CD4-positive, alpha-beta memory T cell (primary cell): ENCODE measurements at regions of chr22 and their contacts with region 1.

Region 1: DNA sequence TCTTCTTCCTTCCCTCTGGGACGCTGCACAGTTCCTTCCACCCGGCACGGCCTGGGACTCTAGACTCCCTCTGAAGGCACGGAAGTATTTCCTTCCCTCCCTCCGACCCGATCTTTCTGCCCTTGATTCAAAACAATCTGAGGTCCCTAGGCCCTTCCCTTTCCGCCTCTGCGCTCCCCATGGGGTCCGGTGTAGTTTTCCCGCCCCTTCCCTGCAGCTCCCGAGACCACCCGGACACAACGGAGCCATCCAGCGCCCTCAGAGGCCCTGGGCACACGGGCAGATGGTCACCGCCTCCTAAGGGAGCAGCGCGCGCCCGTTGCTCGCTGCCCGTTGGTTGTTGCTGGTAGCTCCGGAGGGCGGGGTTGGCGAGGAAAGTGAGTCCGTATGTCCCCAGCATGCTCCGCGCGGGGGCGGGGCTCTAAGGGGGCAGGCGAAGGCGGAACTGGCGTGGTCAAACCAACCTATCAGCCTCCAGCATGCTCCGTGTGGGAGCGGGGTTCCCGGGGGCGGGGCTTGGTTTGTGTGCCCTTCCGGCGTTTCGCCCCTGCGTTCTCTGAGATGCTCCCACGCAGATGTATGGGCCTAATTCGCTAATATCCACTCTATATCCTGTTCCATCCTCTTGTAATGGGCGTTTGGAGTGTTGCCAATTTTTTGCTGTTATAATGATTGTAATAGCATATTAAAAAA is 19.6 kb downstream of the MIF start:
- DNase-seq: peak; percentile 96 to 99 (median 97)
- H3K4me3 ChIP-seq: peak overlapping the region; percentile 57 to 86
- H3K4me3 Mint-ChIP-seq: peak overlapping the region; percentile 91 to 99 (median 96)
- H3K27ac ChIP-seq: peak overlapping the region; percentile 79
- H3K27ac Mint-ChIP-seq: peak overlapping the region; percentile 88 to 98 (median 96)
- H3K4me1 ChIP-seq: peaks cover 7% of the 10 kb centered on the region
- H3K4me1 Mint-ChIP-seq: peaks cover 9 to 25% (median 15%) of the 10 kb centered on the region in 4 donors
- H3K27me3 ChIP-seq: no peaks in the 10 kb centered on the region
- H3K27me3 Mint-ChIP-seq: no peaks in the 10 kb centered on the region

Region 2: DNA sequence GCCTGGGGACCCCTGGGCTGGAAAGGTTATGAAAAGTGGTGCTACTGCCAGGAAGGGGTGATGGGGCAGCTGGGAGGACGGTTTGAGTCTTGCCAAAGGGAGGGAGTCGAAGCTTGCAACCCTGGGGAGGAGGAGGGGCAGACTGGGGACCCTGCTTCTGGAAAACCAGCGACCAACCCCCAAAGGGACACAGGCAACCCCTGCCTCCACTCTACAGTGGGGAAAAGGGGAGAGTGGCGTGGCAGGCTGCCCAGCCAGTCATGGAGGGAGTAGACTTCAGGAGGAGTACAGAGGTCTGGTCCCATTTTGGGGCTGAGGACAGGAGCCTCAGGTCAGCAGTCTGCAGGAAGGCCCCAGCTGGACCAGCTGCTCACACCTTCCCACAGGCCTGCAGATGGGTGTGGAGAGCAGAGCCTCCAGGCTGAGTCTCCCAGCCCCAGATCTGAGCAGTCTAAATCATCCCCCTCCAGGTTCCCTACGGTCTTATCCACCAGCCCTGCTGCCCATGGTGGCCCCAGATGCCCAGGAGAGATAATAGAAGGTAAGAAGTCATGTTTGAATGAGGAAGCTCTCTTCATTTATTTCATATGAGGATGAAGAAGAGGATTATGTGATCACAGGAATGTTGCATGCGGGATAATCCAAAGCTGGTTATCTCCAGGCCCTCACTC is 57.1 kb after region 1 on chr22:
- CTCF ChIA-PET with region 1: no interaction called
- POLR2A ChIA-PET with region 1: interaction called, 3 read pairs
- intact Hi-C with region 1: loop called (anchors 10 kb)
- DNase-seq: no peak
- H3K4me3 ChIP-seq: no peak overlapping the region
- H3K4me3 Mint-ChIP-seq: peak overlapping the region in 3 of 8 donors; percentile 0 to 43 (median 26)
- H3K27ac ChIP-seq: no peak overlapping the region
- H3K27ac Mint-ChIP-seq: peak overlapping the region in 3 of 7 donors; percentile 13 to 35 (median 33)
- H3K4me1 ChIP-seq: peaks cover 16% of the 10 kb centered on the region
- H3K4me1 Mint-ChIP-seq: peaks cover 7 to 29% (median 20%) of the 10 kb centered on the region in 4 donors
- H3K27me3 ChIP-seq: no peaks in the 10 kb centered on the region
- H3K27me3 Mint-ChIP-seq: no peaks in the 10 kb centered on the region